Aorta (tissue), 5 donors: ENCODE measurements at regions of chr10 and their contacts with region 1.

Region 1: DNA sequence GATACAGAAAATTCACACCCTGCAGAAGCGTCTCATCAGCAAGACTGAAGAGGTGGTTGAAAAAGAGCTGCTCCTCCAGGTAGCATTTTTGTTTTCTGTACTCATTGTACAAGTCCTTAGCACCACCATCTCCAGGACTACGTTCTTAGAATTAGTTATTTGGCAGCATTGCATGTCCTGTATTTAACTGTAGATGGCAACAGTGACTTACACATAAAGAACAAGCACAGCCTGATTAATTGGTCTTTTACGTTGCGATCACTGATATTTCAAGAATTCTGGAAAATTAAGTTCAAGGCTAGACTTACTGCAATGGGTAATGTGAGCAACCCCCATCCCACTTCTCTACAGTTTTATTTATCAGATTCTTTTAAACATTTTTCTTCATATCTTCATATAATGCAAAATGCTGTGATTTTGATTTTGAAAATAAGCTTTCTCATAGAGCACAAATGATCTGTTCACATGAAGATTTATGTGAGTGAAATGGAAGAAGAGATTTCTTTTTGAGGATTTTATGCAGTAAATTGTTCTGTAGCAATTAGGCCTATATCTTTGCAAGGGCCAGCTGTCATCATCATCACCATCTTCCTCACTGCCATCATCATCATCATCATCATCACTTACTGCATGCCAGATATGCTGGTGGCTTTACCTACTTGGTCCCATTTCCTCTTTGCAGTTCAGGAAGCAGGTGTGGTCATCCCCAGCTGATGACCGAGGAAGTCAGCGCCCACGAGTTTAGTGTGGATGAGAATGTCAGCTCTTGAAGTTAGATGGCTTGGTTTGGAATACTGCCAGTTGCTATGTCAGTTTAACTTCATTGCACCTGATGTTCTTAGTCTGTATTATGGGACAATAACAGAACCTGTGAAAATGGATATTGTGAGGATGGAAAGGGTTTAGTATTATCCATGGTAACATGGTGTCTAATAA is 53.4 kb downstream of the CFAP58 start:
- DNase-seq: no peak
- ATAC-seq: no peak
- H3K4me3 ChIP-seq: no peak overlapping the region
- H3K27ac ChIP-seq: no peak overlapping the region
- H3K4me1 ChIP-seq: no peaks in the 10 kb centered on the region
- H3K27me3 ChIP-seq: no peaks in the 10 kb centered on the region

Region 2: DNA sequence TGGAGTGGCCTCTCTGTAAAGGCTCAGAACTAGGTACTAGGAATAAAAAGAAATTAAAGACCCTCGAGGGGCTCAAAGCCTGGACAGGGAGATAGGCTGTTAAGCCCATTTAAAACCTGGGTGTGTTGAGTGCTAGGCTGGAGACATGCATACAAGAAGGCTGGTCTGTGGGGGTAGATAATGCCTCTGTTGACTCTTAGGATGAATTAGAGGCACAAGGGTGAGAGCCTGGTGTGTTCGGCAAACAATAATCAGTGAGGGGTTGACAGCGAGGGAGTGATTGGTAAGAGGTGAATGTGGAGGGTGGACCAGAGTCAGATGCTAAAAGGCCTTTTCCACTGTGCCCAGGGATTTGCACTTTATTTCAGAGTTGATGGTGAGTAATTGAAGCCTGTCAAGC is 125.3 kb before region 1 on chr10:
- intact Hi-C with region 1: no loop called
- DNase-seq: no peak
- ATAC-seq: no peak
- H3K4me3 ChIP-seq: no peak overlapping the region
- H3K27ac ChIP-seq: no peak overlapping the region
- H3K4me1 ChIP-seq: no peaks in the 10 kb centered on the region
- H3K27me3 ChIP-seq: no peaks in the 10 kb centered on the region

Region 3: DNA sequence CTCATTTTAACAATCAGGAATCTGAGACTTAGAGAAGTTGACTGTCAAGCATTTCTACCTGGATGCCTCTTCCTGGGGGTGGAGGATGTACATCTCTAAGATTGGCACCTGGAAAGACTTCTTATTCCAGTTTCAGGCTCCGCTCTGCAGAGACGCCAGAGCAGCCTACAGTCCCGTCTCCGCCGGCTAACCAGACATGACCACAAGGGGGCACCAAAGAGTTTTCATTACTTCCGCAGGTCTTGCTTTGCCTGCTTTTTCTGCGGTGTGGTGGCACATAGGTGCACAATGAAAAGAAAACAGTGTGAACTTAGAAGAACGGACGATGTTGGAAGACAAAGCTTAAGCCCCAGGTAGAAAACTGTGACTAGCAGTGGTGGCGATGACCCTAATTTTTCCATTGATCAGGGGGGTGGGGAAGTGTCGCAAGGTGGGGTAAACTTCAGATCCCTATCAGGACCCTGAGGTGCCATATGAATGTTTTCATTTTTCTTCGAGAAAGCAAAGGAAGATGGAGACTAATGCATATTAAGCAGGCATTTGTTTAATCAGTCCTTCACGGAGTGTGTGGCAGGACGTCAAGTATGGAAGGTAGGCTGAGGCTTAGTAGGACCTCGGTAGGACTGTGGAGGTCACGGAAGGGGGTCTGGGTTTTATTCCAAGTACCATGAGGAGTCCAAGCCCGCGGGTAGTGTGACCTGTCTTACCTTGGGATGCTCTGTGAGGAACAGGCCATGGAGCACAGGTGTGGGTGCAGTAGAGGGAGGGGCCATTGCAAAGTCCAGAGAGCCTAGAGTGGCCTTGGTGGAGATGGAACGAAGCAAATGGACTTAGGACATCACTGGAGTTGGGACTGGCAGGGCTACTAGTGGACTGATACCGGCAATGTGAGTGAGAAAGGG is 174.0 kb after region 1 on chr10:
- intact Hi-C with region 1: loop called (anchors 1 to 2 kb)
- DNase-seq: peak; percentile 71 to 84
- ATAC-seq: peak; percentile 79
- H3K4me3 ChIP-seq: no peak overlapping the region
- H3K27ac ChIP-seq: no peak overlapping the region
- H3K4me1 ChIP-seq: no peaks in the 10 kb centered on the region
- H3K27me3 ChIP-seq: no peaks in the 10 kb centered on the region

Region 4: GRCh38 chr10:104925232-104925851 is 518.4 kb after region 1 on chr10:
- intact Hi-C with region 1: loop called in 1 of 2 experiments (anchors 10 kb)
- DNase-seq: no peak
- ATAC-seq: no peak
- H3K4me3 ChIP-seq: no peak overlapping the region
- H3K27ac ChIP-seq: no peak overlapping the region
- H3K4me1 ChIP-seq: no peaks in the 10 kb centered on the region
- H3K27me3 ChIP-seq: peaks cover 0 to 3% of the 10 kb centered on the region in 2 donors